ENCODE measurements at regions of chr12 and their contacts with region 1.

Region 1: GRCh38 chr12:54958048-54958658 is 26.4 kb downstream of the TESPA1 start:
- DNase-seq: peak; percentile 60
- ATAC-seq: no peak
- H3K4me3 ChIP-seq: no peak overlapping the region
- H3K4me3 Mint-ChIP-seq: no peak overlapping the region
- H3K27ac ChIP-seq: no peak overlapping the region
- H3K27ac Mint-ChIP-seq: no peak overlapping the region
- H3K4me1 ChIP-seq: peaks cover 6 to 11% of the 10 kb centered on the region in 2 donors
- H3K4me1 Mint-ChIP-seq: peaks cover 16% of the 10 kb centered on the region
- H3K27me3 ChIP-seq: no peaks in the 10 kb centered on the region
- H3K27me3 Mint-ChIP-seq: no peaks in the 10 kb centered on the region
- CTCF ChIP-seq: peak; percentile 77

Region 2: DNA sequence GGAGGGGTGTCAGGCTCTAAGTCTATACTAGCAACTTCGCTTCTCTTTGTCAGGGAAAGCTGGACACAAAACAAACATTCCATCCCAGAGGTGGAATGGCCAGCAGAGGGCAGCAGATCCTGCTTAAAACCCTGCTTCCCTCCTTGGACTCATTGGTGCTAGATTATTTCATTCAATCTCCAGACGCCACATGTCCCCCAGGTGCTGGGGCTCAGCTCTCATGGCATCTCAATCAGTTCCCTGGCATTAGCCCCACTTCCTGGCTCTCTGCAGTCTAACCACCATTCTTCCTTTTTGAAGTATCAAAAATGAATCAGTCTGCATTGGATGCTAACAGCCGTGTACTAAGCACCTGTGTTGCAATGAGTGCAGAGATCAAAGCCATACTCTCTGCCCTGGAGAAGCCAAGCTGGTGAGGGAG is 361.6 kb before region 1 on chr12:
- CTCF ChIA-PET with region 1: no interaction called
- POLR2A ChIA-PET with region 1: no interaction called
- intact Hi-C with region 1: loop called (anchors 2 kb)
- DNase-seq: peak; percentile 52
- ATAC-seq: no peak
- H3K4me3 ChIP-seq: no peak overlapping the region
- H3K4me3 Mint-ChIP-seq: no peak overlapping the region
- H3K27ac ChIP-seq: no peak overlapping the region
- H3K27ac Mint-ChIP-seq: no peak overlapping the region
- H3K4me1 ChIP-seq: no peaks in the 10 kb centered on the region
- H3K4me1 Mint-ChIP-seq: no peaks in the 10 kb centered on the region
- H3K27me3 ChIP-seq: peaks cover 0 to 32% (median 3%) of the 10 kb centered on the region in 4 experiments
- H3K27me3 Mint-ChIP-seq: peaks cover 32% of the 10 kb centered on the region
- CTCF ChIP-seq: peak; percentile 85

Region 3: GRCh38 chr12:54701940-54702592 is 256.1 kb before region 1 on chr12:
- CTCF ChIA-PET with region 1: interaction called, 12 read pairs
- POLR2A ChIA-PET with region 1: no interaction called
- intact Hi-C with region 1: loop called (anchors 1 kb)
- DNase-seq: peak; percentile 58
- ATAC-seq: no peak
- H3K4me3 ChIP-seq: no peak overlapping the region
- H3K4me3 Mint-ChIP-seq: no peak overlapping the region
- H3K27ac ChIP-seq: no peak overlapping the region
- H3K27ac Mint-ChIP-seq: no peak overlapping the region
- H3K4me1 ChIP-seq: no peaks in the 10 kb centered on the region
- H3K4me1 Mint-ChIP-seq: no peaks in the 10 kb centered on the region
- H3K27me3 ChIP-seq: no peaks in the 10 kb centered on the region
- H3K27me3 Mint-ChIP-seq: peaks cover 19% of the 10 kb centered on the region
- CTCF ChIP-seq: peak; percentile 78

Region 4: GRCh38 chr12:54723379-54724256 is 234.5 kb before region 1 on chr12:
- CTCF ChIA-PET with region 1: interaction called, 4 read pairs
- POLR2A ChIA-PET with region 1: no interaction called
- intact Hi-C with region 1: loop called (anchors 1 kb)
- DNase-seq: peak; percentile 52
- ATAC-seq: no peak
- H3K4me3 ChIP-seq: no peak overlapping the region
- H3K4me3 Mint-ChIP-seq: no peak overlapping the region
- H3K27ac ChIP-seq: no peak overlapping the region
- H3K27ac Mint-ChIP-seq: no peak overlapping the region
- H3K4me1 ChIP-seq: peaks cover 0 to 3% of the 10 kb centered on the region in 2 donors
- H3K4me1 Mint-ChIP-seq: peaks cover 3% of the 10 kb centered on the region
- H3K27me3 ChIP-seq: peaks cover 0 to 2% (median 0%) of the 10 kb centered on the region in 4 experiments
- H3K27me3 Mint-ChIP-seq: peaks cover 34% of the 10 kb centered on the region
- CTCF ChIP-seq: peak; percentile 73

Region 5: DNA sequence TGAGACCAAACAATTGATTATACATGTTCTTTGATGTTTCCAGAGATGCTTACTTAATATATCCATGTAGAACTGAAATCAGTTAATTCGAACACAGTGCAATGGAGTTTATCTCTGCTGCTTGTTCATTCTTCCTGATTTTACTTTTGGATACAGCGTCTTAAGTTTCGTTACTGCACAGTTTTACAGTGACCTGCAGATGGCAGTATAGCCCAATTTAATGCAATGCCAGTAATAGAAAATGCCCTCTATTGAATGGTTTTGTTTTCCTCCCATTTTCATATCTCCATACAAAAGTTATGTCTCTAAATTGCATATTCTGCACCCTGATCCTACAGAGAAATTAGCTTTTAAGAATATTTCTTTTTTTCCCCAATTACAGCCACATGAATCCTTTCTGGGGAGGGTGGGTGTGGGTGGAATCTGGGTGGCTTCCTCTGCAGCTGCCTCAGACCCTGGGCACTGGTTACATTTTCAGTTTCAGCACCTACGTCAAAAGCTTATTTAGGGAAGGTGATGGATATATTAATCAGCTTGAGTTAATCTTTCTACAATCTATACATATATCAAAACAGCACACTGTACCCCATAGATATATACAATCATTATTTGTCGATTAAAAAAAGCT is 208.8 kb before region 1 on chr12:
- CTCF ChIA-PET with region 1: interaction called, 57 read pairs
- POLR2A ChIA-PET with region 1: no interaction called
- intact Hi-C with region 1: loop called (anchors 1 kb)
- DNase-seq: peak; percentile 72
- ATAC-seq: peak; percentile 43
- H3K4me3 ChIP-seq: no peak overlapping the region
- H3K4me3 Mint-ChIP-seq: peak overlapping the region; percentile 35
- H3K27ac ChIP-seq: no peak overlapping the region
- H3K27ac Mint-ChIP-seq: no peak overlapping the region
- H3K4me1 ChIP-seq: no peaks in the 10 kb centered on the region
- H3K4me1 Mint-ChIP-seq: peaks cover 5% of the 10 kb centered on the region
- H3K27me3 ChIP-seq: no peaks in the 10 kb centered on the region
- H3K27me3 Mint-ChIP-seq: peaks cover 19% of the 10 kb centered on the region
- CTCF ChIP-seq: peak; percentile 85

Region 6: DNA sequence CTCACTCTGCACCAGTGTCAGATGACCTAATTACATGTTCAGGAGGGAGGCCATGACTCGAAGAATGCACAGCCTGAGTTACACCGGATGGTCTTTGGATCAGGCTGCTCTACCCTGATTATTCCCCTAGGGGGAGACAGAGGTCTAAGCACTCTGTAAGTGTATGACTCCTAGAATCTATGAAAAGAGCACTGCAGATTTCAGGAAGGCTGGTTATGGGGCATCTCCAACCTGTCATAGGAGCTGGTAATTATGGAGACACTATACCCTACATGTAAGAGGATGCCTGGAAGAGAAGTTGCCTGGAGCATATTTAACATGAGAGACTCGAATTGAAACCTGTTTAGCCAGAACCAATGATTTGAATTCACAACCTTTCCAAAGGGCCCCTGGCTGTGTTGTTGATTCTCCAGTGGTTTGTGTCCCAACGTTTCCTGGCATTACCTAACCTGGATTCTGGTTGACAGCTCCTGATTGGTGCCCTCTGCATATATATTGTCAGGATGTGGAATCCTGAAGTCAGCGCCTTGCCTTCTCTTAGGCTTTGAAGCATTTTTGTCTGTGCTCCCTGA is 104.1 kb before region 1 on chr12 and contains the start of gene MUCL1:
- CTCF ChIA-PET with region 1: interaction called, 8 read pairs
- POLR2A ChIA-PET with region 1: no interaction called
- intact Hi-C with region 1: loop called (anchors 1 kb)
- DNase-seq: peak; percentile 68
- ATAC-seq: peak; percentile 81
- H3K4me3 ChIP-seq: no peak within 1 kb of the TSS
- H3K4me3 Mint-ChIP-seq: no peak within 1 kb of the TSS
- H3K27ac ChIP-seq: no peak within 1 kb of the TSS
- H3K27ac Mint-ChIP-seq: no peak within 1 kb of the TSS
- H3K4me1 ChIP-seq: no peaks in the 10 kb centered on the region
- H3K4me1 Mint-ChIP-seq: no peaks in the 10 kb centered on the region
- H3K27me3 ChIP-seq: no peaks in the 10 kb centered on the region
- H3K27me3 Mint-ChIP-seq: peaks cover 5% of the 10 kb centered on the region
- CTCF ChIP-seq: peak; percentile 98
- total RNA-seq, gene MUCL1: not detected in 2 replicates

Region 7: DNA sequence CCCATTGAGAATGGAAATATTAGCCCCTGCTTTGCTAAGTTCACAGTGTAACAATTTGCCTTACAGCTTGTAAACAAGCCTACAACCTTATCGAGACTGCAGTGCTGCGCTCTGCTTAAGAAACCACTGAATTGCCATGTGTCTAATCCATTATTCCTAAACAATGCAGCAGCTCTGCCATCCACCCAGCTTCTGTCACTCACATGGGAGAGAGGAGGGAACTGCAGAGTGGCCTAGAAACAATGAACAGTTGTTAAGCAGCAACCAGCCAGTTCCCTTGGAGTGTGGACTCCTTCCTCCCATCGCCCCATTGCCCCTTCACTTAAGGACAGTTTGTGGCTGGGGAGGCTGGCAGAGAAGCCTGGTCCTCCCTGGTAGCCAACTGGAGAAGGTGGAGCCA is 16.5 kb before region 1 on chr12:
- CTCF ChIA-PET with region 1: no interaction called
- POLR2A ChIA-PET with region 1: no interaction called
- intact Hi-C with region 1: no loop called
- DNase-seq: no peak
- ATAC-seq: no peak
- H3K4me3 ChIP-seq: no peak overlapping the region
- H3K4me3 Mint-ChIP-seq: no peak overlapping the region
- H3K27ac ChIP-seq: no peak overlapping the region
- H3K27ac Mint-ChIP-seq: no peak overlapping the region
- H3K4me1 ChIP-seq: no peaks in the 10 kb centered on the region
- H3K4me1 Mint-ChIP-seq: no peaks in the 10 kb centered on the region
- H3K27me3 ChIP-seq: no peaks in the 10 kb centered on the region
- H3K27me3 Mint-ChIP-seq: no peaks in the 10 kb centered on the region
- CTCF ChIP-seq: no peak

Measured in B cell (primary cell).